Lower leg skin (tissue), 4 donors: ENCODE measurements at regions of chr5 and their contacts with region 1.

Region 1: DNA sequence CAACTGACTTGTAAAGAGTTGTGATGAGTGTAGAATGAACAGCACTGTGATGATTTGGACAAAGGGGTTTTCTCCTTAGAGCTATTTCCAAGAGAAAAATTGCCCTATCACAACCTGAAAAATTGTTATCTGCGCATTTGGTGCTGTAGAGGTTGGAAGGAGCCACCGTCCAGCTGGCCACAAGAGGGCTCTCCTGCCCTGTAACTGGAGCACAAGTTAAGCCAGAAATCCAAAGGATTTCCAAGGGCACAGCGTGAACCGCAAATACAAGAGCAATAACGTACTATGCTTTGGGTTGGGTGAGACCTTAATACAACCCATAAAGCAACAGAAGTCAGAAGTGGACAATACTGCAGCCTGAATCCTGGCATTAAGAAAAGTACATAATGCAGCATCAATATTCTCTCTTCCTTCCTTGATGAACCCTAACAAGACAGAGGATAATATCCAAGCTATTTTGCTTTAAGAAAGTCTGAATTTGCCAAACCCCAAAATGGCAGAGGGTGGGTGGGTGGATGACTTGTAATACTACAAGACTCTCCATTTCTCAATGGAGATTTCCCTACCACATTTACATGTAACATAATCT is 56.8 kb upstream of the SMIM32 start:
- DNase-seq: peak in 1 of 2 donors; percentile 17
- H3K4me3 ChIP-seq: no peak overlapping the region
- CTCF ChIP-seq: no peak
- POLR2A ChIP-seq: no peak

Region 2: GRCh38 chr5:135729321-135729786 is 520.4 kb before region 1 on chr5:
- intact Hi-C with region 1: no loop called
- DNase-seq: no peak
- H3K4me3 ChIP-seq: no peak overlapping the region
- CTCF ChIP-seq: no peak
- POLR2A ChIP-seq: no peak

Region 3: DNA sequence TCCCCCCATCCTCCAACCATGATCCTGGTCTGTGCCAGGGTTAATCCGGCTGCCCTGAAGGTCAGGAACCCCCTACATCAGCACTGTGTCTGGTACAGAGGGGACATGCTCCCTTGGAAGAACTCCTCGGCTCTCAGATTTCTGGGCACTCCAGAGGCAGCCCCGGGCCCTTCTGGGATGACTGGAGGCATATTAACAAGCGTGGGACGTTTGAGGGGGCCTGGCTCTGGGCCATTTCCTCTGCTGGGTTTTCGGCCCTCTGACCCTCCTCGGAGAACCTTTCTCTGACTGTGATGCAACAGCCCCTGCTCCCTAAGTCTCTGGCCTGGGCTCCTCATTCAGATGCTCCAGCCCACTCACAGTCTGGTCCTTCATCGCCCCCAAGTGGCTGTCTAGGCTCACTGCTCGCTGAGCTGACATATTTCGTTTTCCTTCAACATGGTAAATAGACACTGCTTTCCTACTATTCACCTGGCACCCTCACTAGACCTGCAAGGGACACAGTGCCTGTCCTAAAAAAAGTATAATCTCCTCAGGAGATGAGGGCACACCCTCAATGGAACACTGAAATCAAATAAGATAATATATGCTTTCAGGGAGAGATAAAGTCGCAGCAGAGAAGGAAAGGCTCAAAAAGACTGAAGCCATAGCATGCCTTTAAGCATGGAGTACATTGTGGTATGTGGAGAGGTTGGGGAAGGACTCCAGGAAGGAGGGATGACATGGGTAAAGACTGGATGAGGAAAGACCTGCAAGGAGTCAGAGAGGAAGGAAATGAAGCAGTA is 520.3 kb after region 1 on chr5:
- intact Hi-C with region 1: loop called (anchors 10 kb)
- DNase-seq: peak; percentile 49 to 89
- H3K4me3 ChIP-seq: no peak overlapping the region
- CTCF ChIP-seq: no peak
- POLR2A ChIP-seq: no peak

Region 4: GRCh38 chr5:136984772-136985446 is 735.1 kb after region 1 on chr5:
- intact Hi-C with region 1: no loop called
- DNase-seq: no peak
- H3K4me3 ChIP-seq: no peak overlapping the region
- CTCF ChIP-seq: no peak
- POLR2A ChIP-seq: no peak

Region 5: DNA sequence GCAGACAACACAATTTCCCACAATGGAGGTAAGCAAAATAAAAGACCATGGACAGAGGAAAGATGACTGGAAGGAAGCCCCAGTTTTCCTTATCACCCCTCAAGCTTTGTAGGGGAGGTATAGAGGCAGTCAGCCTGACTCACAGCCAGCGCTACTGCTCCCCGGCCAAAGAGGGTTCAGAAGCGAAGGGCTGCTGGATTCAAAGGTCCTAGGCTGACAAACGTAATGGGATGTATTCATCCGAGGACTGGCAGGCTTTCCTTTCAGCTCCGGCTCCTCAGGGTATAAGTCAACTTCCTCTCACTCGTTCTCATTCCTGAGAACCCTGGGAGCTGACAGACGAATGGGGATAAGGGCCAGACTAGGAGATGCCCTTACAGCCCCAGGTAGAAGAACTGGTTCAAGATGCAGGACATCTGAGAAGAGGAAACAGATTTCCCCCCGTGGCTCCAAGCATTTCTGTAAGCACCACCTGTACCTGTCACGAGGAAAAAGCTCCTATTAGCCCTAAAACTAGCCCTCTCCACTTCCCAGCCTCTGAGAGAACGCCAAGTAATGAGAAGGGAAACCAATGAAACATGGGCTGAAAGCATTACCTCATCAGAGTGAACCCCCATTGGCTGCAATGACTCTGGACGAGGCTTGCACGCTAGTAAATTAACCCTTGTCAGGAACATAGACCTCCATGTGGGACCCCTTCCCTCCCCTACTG is 1805.2 kb after region 1 on chr5:
- intact Hi-C with region 1: no loop called
- DNase-seq: no peak
- H3K4me3 ChIP-seq: no peak overlapping the region
- CTCF ChIP-seq: no peak
- POLR2A ChIP-seq: no peak